GM12878 (cell line): ENCODE measurements at regions of chr3 and their contacts with region 1.

Region 1: GRCh38 chr3:123723522-123724168 is 138.8 kb upstream of the HACD2 start:
- DNase-seq: peak; percentile 27
- ATAC-seq: peak; percentile 90
- H3K4me3 ChIP-seq: no peak overlapping the region
- H3K27ac ChIP-seq: no peak overlapping the region
- H3K4me1 ChIP-seq: no peaks in the 10 kb centered on the region
- H3K27me3 ChIP-seq: no peaks in the 10 kb centered on the region; a peak in 1 of 4 replicates
- CTCF ChIP-seq: peak; percentile 81 to 89 (median 87)
- EP300 ChIP-seq: no peak
- POLR2A ChIP-seq: no peak
- RAD21 ChIP-seq: peak; percentile 67

Region 2: DNA sequence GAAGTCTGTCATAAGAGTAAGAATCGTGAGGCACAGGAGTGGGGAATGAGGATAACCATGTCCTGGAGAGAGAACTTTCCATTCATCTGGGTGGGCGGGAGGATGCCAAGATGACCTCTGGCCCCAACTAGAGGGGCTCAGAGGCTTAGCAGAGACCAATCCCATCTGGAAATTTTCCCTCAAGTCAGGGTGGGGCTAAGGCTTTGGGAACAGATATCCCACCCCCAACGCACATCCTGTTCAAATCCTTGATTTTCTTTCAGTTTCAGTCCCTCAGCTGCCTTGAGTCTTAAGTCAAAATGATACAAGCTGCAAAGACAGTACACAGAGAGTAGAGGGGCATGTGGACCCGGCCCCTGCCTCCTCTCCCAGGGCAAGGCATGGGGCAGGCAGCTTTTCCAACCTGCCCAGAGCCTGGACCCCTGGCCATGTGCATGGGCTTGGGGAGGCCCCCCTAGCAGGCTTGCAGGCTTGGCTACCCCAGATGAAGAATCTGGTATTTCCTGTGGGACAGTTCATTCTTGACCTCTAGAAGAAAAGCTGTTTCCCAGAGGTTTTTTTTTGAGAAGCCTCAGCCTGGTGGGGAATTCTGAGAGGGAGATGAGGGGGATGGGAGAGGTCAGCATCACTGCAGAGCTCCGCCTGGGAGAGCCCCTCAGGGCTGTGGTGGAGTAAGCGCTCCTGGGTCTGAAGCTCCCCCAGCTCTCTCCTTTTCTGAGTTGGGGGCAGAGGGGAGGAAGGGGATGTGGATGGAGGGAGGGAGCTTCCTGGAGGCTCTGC is 29.1 kb before region 1 on chr3:
- CTCF ChIA-PET with region 1: interaction called, 12 read pairs
- POLR2A ChIA-PET with region 1: no interaction called
- RAD21 ChIA-PET with region 1: interaction called, 4 read pairs
- SMC1A ChIA-PET with region 1: interaction called, 4 read pairs
- in situ Hi-C with region 1: no loop called
- intact Hi-C with region 1: no loop called
- DNase-seq: no peak
- ATAC-seq: no peak
- H3K4me3 ChIP-seq: no peak overlapping the region
- H3K27ac ChIP-seq: no peak overlapping the region
- H3K4me1 ChIP-seq: peaks cover 6% of the 10 kb centered on the region
- H3K27me3 ChIP-seq: no peaks in the 10 kb centered on the region
- CTCF ChIP-seq: no peak
- EP300 ChIP-seq: no peak
- POLR2A ChIP-seq: no peak
- RAD21 ChIP-seq: no peak